CD8-positive, alpha-beta T cell (primary cell): ENCODE measurements at regions of chr17 and their contacts with region 1.

Region 1: DNA sequence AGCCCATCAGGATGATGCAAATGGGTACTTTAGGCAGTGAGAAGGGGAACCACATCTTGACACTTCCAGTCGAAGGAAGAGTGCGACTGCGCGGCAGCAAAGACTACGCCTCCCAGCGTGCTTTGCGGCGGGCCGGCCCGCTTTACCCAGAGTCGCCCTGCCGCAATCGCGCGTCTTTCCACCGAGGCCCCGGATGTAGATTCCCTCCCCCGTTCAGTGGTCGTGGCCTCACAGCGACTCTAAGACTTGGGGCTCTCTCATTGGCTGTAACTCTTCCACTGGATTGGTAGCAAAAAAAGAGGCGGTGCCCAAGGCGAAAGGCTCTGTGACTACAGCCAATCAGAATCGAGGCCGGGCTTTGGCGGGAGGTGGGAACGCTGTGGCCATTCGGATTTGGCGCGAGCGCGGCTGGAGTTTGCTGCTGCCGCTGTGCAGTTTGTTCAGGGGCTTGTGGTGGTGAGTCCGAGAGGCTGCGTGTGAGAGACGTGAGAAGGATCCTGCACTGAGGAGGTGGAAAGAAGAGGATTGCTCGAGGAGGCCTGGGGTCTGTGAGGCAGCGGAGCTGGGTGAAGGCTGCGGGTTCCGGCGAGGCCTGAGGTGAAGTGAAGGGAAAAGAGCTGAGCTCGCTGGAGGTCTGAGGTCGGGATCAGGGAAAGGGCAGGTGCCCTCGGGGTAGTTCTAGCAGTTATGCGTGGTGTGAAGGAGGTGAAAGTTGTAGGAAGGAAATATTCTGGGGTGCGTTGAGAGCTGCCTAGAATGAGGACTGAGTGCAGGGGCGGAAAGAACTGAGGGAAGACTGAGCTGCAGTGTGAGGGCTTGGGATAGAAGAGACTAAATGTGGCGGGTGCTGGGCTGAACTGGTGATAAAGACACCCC is at the start of gene CDC6:
- DNase-seq: peak; percentile 97 to 99 (median 98)
- ATAC-seq: peak; percentile 91
- H3K4me3 ChIP-seq: peak within 1 kb of the TSS; percentile 73 to 84
- H3K4me3 Mint-ChIP-seq: peak within 1 kb of the TSS; percentile 97
- H3K27ac ChIP-seq: peak within 1 kb of the TSS; percentile 21 to 36
- H3K27ac Mint-ChIP-seq: peak within 1 kb of the TSS; percentile 89
- H3K4me1 ChIP-seq: peaks cover 5% of the 10 kb centered on the region
- H3K4me1 Mint-ChIP-seq: peaks cover 22% of the 10 kb centered on the region
- H3K27me3 ChIP-seq: no peaks in the 10 kb centered on the region
- H3K27me3 Mint-ChIP-seq: no peaks in the 10 kb centered on the region
- CTCF ChIP-seq: no peak
- total RNA-seq, gene CDC6: 2.0 to 2.9 TPM

Region 2: GRCh38 chr17:39952680-39953470 is 334.9 kb before region 1 on chr17:
- CTCF ChIA-PET with region 1: no interaction called
- POLR2A ChIA-PET with region 1: no interaction called
- intact Hi-C with region 1: loop called in 1 of 2 experiments (anchors 1 kb)
- DNase-seq: peak; percentile 92 to 97 (median 95)
- ATAC-seq: peak; percentile 87
- H3K4me3 ChIP-seq: peak overlapping the region; percentile 66 to 80
- H3K4me3 Mint-ChIP-seq: peak overlapping the region; percentile 86
- H3K27ac ChIP-seq: peak overlapping the region; percentile 51 to 74
- H3K27ac Mint-ChIP-seq: peak overlapping the region; percentile 89
- H3K4me1 ChIP-seq: peaks cover 26% of the 10 kb centered on the region
- H3K4me1 Mint-ChIP-seq: peaks cover 22% of the 10 kb centered on the region
- H3K27me3 ChIP-seq: no peaks in the 10 kb centered on the region
- H3K27me3 Mint-ChIP-seq: no peaks in the 10 kb centered on the region
- CTCF ChIP-seq: no peak

Region 3: DNA sequence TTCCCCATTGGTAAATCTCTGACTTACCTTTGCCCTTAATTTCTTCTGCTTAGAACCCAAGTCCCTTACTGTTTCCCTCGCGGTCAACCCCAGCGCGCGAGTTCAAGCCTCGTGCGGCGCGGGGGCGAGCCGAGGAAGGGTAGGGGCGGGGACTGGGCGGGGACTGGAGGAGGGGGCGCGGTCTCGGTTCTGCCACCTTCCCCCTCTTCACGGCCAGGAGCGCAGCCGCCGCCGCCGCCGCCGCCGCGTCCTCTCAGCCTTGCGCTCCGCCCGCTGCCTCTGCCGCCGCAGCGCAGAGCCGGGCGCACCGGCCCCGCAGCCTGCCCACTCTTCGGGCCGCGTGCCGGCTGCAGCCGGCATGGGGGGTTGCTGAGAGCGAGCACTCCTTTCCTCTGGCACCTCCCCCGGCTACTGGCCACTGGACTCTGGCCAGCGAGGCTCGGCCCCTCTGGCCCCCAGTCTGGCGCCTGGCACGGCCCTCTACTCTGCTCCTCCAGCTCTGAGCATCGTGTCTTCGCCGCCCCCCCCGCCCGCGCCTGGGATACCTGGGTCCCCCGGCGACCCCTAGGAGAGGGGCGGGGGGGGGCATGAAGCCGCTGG is 110.4 kb before region 1 on chr17 and contains the start of gene RAPGEFL1:
- CTCF ChIA-PET with region 1: no interaction called
- POLR2A ChIA-PET with region 1: no interaction called
- intact Hi-C with region 1: no loop called
- DNase-seq: peak; percentile 70 to 90 (median 81)
- ATAC-seq: peak; percentile 99
- H3K4me3 ChIP-seq: peak within 1 kb of the TSS; percentile 53 to 54
- H3K4me3 Mint-ChIP-seq: peak within 1 kb of the TSS; percentile 72
- H3K27ac ChIP-seq: no peak within 1 kb of the TSS
- H3K27ac Mint-ChIP-seq: no peak within 1 kb of the TSS
- H3K4me1 ChIP-seq: peaks cover 12% of the 10 kb centered on the region
- H3K4me1 Mint-ChIP-seq: peaks cover 11% of the 10 kb centered on the region
- H3K27me3 ChIP-seq: no peaks in the 10 kb centered on the region
- H3K27me3 Mint-ChIP-seq: no peaks in the 10 kb centered on the region
- CTCF ChIP-seq: no peak
- total RNA-seq, gene RAPGEFL1: 8.8 to 9.2 TPM

Region 4: GRCh38 chr17:40203131-40203530 is 84.6 kb before region 1 on chr17:
- CTCF ChIA-PET with region 1: interaction called, 19 read pairs
- POLR2A ChIA-PET with region 1: no interaction called
- intact Hi-C with region 1: loop called (anchors 1 kb)
- DNase-seq: no peak
- ATAC-seq: no peak
- H3K4me3 ChIP-seq: no peak overlapping the region
- H3K4me3 Mint-ChIP-seq: no peak overlapping the region
- H3K27ac ChIP-seq: no peak overlapping the region
- H3K27ac Mint-ChIP-seq: no peak overlapping the region
- H3K4me1 ChIP-seq: no peaks in the 10 kb centered on the region
- H3K4me1 Mint-ChIP-seq: peaks cover 8% of the 10 kb centered on the region
- H3K27me3 ChIP-seq: peaks cover 0 to 4% of the 10 kb centered on the region in 2 experiments
- H3K27me3 Mint-ChIP-seq: peaks cover 6% of the 10 kb centered on the region
- CTCF ChIP-seq: no peak

Region 5: GRCh38 chr17:40303009-40303657 is 15.4 kb after region 1 on chr17:
- CTCF ChIA-PET with region 1: interaction called, 31 read pairs
- POLR2A ChIA-PET with region 1: interaction called, 3 read pairs
- intact Hi-C with region 1: no loop called
- DNase-seq: peak in 5 of 9 experiments; percentile 41 to 83 (median 66)
- ATAC-seq: peak; percentile 69
- H3K4me3 ChIP-seq: no peak overlapping the region
- H3K4me3 Mint-ChIP-seq: no peak overlapping the region
- H3K27ac ChIP-seq: no peak overlapping the region
- H3K27ac Mint-ChIP-seq: no peak overlapping the region
- H3K4me1 ChIP-seq: peaks cover 35% of the 10 kb centered on the region
- H3K4me1 Mint-ChIP-seq: peaks cover 12% of the 10 kb centered on the region
- H3K27me3 ChIP-seq: no peaks in the 10 kb centered on the region
- H3K27me3 Mint-ChIP-seq: no peaks in the 10 kb centered on the region
- CTCF ChIP-seq: peak; percentile 85

Region 6: GRCh38 chr17:40818733-40819527 is 531.2 kb after region 1 on chr17:
- CTCF ChIA-PET with region 1: no interaction called
- POLR2A ChIA-PET with region 1: no interaction called
- intact Hi-C with region 1: loop called (anchors 2 kb)
- DNase-seq: peak; percentile 70 to 94 (median 85)
- ATAC-seq: peak; percentile 76
- H3K4me3 ChIP-seq: peak overlapping the region; percentile 69 to 77
- H3K4me3 Mint-ChIP-seq: peak overlapping the region; percentile 91
- H3K27ac ChIP-seq: peak overlapping the region; percentile 70 to 79
- H3K27ac Mint-ChIP-seq: peak overlapping the region; percentile 95
- H3K4me1 ChIP-seq: peaks cover 17% of the 10 kb centered on the region
- H3K4me1 Mint-ChIP-seq: peaks cover 26% of the 10 kb centered on the region
- H3K27me3 ChIP-seq: peaks cover 0 to 3% of the 10 kb centered on the region in 2 experiments
- H3K27me3 Mint-ChIP-seq: peaks cover 10% of the 10 kb centered on the region
- CTCF ChIP-seq: no peak